Mucosa of descending colon (tissue), 3 donors: ENCODE measurements at regions of chr10 and their contacts with region 1.

Region 1: DNA sequence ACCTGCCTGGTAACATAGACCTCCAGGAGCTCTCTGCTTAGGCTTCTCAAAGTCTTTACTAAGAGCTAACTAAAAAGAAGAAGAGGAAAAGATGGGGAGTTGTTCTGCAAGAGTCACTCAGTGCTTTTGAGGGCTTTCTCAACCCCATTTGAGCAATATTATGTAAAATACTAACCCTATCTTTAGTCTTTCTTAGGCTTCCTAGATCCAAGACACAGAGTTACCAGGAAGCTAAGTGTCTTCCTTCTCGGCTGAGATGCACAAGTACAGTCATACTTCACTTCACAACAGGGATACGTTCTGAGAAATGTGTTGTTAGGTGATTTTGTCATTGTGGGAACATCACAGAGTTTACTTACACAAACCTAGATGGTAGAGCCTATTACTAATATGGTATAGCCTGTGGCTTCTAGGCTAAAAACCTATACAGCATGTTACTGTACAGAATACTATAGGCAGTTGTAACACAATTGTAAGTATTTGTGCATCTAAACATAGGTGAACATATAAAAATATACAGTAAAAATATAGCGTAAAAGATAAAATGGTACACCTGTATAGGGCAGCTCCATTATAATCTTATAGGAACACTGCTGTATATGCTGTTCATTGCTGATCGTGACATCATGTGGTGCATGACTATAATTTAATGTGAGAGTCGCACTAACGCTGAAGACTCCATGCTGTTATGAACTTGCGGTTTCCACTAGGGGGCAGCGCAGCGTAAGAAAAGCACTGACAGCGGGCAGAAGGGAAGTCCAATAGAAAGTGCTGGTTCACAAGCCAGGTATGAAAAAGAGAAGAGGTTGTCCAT is 16.3 kb downstream of the ANKRD22 start:
- DNase-seq: peak; percentile 86 to 92 (median 91)
- ATAC-seq: peak; percentile 96
- H3K4me3 ChIP-seq: no peak overlapping the region
- H3K4me1 ChIP-seq: no peaks in the 10 kb centered on the region
- CTCF ChIP-seq: peak; percentile 68

Region 2: GRCh38 chr10:88990384-88991160 is 155.3 kb after region 1 on chr10 and contains the start of gene FAS:
- intact Hi-C with region 1: no loop called
- DNase-seq: peak; percentile 85 to 90 (median 88)
- ATAC-seq: peak; percentile 87
- H3K4me3 ChIP-seq: peak within 1 kb of the TSS; percentile 92
- H3K4me1 ChIP-seq: peaks cover 28% of the 10 kb centered on the region
- CTCF ChIP-seq: no peak
- total RNA-seq, gene FAS: 31.8 to 51.0 (median 50.8) TPM

Region 3: DNA sequence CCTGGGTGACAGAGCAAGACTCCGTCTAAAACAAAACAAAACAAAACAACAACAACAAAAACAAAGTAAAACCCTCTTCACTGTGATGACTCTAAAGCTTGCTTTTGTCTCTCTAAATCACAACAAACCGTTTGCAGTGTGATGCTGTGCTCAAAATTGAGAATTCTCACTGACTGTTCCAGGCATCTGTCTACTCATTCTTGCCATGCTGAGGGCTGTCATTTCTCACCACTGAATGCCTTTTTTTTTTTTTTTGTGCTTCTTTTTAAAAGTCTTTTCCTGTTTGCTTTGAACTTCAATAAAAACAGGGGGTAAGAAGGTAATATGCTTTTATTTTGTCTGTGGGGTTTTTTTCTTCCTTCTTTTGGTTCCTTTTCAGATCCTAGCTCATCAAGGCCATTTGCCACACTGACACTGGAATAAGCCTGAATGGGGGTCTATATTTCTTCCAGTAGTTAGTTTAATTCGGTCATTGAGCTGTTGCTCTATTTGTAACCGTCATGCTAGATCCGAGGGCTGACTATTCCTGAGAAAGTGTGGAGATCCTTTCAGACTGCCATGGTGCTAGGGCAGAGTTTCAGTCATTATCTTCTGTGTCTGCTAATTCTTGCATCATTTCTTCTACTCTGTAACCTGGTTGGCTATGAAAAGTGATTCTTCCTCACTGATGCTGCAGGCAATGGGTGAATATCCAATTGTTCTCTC is 165.9 kb after region 1 on chr10:
- intact Hi-C with region 1: loop called in 1 of 2 experiments (anchors 10 kb)
- DNase-seq: no peak
- ATAC-seq: peak; percentile 56
- H3K4me3 ChIP-seq: no peak overlapping the region
- H3K4me1 ChIP-seq: peaks cover 2% of the 10 kb centered on the region
- CTCF ChIP-seq: no peak

Region 4: GRCh38 chr10:89217057-89217990 is 382.0 kb after region 1 on chr10:
- intact Hi-C with region 1: loop called (anchors 10 kb)
- DNase-seq: peak in 2 of 3 donors; percentile 44 to 84
- ATAC-seq: peak; percentile 66
- H3K4me3 ChIP-seq: no peak overlapping the region
- H3K4me1 ChIP-seq: peaks cover 8% of the 10 kb centered on the region
- CTCF ChIP-seq: peak; percentile 58